HEK293 (cell line): ENCODE measurements at regions of chr13 and their contacts with region 1.

Region 1: GRCh38 chr13:98054301-98054700 is 88.6 kb upstream of the FARP1 start:
- H3K4me3 ChIP-seq: no peak overlapping the region
- H3K27ac ChIP-seq: no peak overlapping the region
- H3K4me1 ChIP-seq: no peaks in the 10 kb centered on the region; the same call in 1 of the 2 replicates
- CTCF ChIP-seq: no peak

Region 2: DNA sequence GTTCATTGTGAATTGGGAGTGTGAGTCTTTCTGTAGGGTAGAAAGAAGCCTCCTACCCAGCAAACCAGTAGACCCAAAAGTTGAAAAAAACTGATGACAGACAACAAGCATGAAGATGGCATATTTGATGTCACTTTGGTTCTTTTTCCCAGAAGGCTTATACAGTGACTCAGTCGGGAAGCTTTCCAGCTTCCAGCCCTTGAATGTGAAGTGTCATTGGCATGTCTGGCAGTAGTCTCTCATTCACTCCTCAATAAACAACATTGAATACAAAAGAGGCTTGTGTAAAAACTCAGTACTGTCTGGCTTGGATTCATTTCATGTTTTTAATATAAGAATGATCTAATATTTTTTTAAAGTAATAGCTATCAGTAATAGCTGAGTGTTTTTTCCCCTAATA is 32.1 kb before region 1 on chr13:
- CTCF ChIA-PET with region 1: no interaction called
- POLR2A ChIA-PET with region 1: interaction called, 10 read pairs
- H3K4me3 ChIP-seq: no peak overlapping the region
- H3K27ac ChIP-seq: no peak overlapping the region
- H3K4me1 ChIP-seq: no peaks in the 10 kb centered on the region
- CTCF ChIP-seq: no peak